ENCODE measurements at regions of chr1 and their contacts with region 1.

Region 1: DNA sequence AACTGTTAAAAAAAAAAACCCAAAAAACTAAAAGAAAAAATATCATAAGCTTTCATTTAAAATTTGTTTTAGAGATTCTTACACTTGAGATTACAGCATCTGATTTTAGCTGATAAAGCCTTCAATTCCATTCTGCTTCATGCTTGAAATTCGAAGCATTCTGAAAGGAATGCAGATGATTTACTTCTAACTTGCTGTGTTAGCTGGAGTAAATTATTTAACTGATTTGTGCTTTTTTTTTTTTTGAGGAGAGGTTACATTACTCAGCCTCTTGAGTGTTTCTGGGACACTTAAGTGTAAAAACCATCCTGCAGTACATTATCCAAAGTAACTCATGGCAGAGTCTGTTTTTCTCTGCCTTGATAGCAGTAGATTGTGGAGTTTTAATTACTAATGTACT is 4.5 kb upstream of the TRIM67 start:
- DNase-seq: no peak
- H3K4me3 Mint-ChIP-seq: no peak overlapping the region
- H3K27ac Mint-ChIP-seq: no peak overlapping the region
- H3K4me1 Mint-ChIP-seq: no peaks in the 10 kb centered on the region
- H3K27me3 Mint-ChIP-seq: peaks cover 59% of the 10 kb centered on the region
- CTCF ChIP-seq: no peak

Region 2: GRCh38 chr1:231091831-231092301 is 65.4 kb before region 1 on chr1:
- CTCF ChIA-PET with region 1: interaction called, 3 read pairs
- POLR2A ChIA-PET with region 1: no interaction called
- intact Hi-C with region 1: loop called (anchors 10 kb)
- DNase-seq: peak; percentile 79
- H3K4me3 Mint-ChIP-seq: no peak overlapping the region
- H3K27ac Mint-ChIP-seq: no peak overlapping the region
- H3K4me1 Mint-ChIP-seq: peaks cover 4% of the 10 kb centered on the region
- H3K27me3 Mint-ChIP-seq: peaks cover 76% of the 10 kb centered on the region
- CTCF ChIP-seq: peak; percentile 87

Measured in MCF 10A (cell line).